ENCODE measurements at regions of chr2 and their contacts with region 1.

Region 1: GRCh38 chr2:218357236-218358159 is 841 bp downstream of the CATIP start:
- DNase-seq: no peak
- ATAC-seq: no peak
- H3K4me3 ChIP-seq: no peak overlapping the region
- H3K27ac ChIP-seq: no peak overlapping the region
- H3K4me1 ChIP-seq: no peaks in the 10 kb centered on the region
- H3K27me3 ChIP-seq: no peaks in the 10 kb centered on the region
- CTCF ChIP-seq: no peak

Region 2: GRCh38 chr2:218301176-218301819 is 56.2 kb before region 1 on chr2:
- intact Hi-C with region 1: loop called (anchors 5 kb)
- DNase-seq: peak; percentile 69 to 83
- ATAC-seq: peak; percentile 82 to 94 (median 84)
- H3K4me3 ChIP-seq: no peak overlapping the region
- H3K27ac ChIP-seq: no peak overlapping the region
- H3K4me1 ChIP-seq: no peaks in the 10 kb centered on the region
- H3K27me3 ChIP-seq: no peaks in the 10 kb centered on the region
- CTCF ChIP-seq: peak; percentile 97

Region 3: DNA sequence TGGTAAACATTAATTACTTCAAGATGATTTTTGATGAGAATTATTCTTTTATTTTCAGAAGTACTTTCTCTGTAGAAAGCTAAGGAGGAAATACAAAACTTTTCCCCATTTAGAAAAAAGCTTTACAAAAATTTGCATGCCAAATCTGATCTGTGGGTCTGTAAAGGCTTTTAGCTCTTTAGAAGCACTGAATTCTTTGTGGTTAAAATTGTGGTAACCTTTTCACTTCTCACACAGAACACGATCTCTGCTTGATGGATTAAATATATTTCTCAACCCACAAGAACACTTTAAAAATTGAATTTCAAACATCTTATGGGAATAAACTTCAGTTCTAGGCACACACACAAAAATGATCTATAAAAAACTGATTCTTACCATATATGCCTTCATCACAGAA is 125.2 kb after region 1 on chr2:
- intact Hi-C with region 1: no loop called
- DNase-seq: no peak
- ATAC-seq: no peak
- H3K4me3 ChIP-seq: no peak overlapping the region
- H3K27ac ChIP-seq: no peak overlapping the region
- H3K4me1 ChIP-seq: no peaks in the 10 kb centered on the region
- H3K27me3 ChIP-seq: no peaks in the 10 kb centered on the region
- CTCF ChIP-seq: no peak

Region 4: DNA sequence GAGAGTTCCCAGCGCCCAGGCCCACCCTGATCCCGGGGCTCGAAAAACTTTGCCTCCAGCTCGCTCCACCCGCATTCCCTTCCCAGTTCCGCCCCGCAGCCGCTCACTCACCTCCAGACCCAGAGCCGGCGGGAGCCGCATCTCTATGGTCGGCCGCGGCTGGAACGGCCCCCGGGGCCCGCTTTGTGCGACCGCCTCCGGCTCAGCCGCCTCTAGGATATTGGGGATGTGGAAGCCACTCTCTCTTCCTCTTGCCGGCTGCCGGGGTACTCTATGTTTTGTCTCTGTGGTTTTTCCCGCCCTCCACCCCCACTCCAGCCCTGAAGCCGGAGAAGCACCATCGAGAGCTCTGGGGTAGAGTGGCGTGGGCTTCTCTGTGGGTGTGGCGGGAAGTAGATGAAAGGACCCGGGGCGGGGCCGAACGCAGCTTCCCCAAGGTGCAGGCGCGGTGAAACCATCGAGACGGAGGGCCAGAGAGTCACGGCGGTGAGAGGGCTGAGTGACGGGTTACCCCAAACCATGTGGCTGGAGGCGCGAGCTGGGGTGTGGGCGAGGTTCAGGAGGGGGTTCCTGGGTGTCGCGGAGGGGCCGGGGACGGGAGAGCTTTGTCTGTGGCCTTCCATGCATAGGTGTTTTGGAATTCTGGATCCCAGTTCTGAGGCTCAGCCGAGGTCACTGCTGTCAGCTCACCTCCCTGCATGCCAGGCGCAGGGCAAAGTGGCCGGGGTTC is 301.9 kb after region 1 on chr2 and contains the starts of genes BCS1L and ZNF142:
- intact Hi-C with region 1: no loop called
- DNase-seq: peak; percentile 93 to 95
- ATAC-seq: peak; percentile 82 to 88 (median 85)
- H3K4me3 ChIP-seq: peak within 1 kb of the TSS; percentile 95
- H3K27ac ChIP-seq: peak within 1 kb of the TSS; percentile 84
- H3K4me1 ChIP-seq: peaks cover 48% of the 10 kb centered on the region
- H3K27me3 ChIP-seq: no peaks in the 10 kb centered on the region
- CTCF ChIP-seq: no peak
- total RNA-seq, gene BCS1L: 24.3 to 40.5 (median 26.8) TPM
- total RNA-seq, gene ZNF142: 12.0 to 33.5 (median 30.1) TPM

Measured in psoas muscle (tissue), 8 donors.